AG04450 (cell line): ENCODE measurements at regions of chr20 and their contacts with region 1.

Region 1: GRCh38 chr20:3158968-3159431 is 665 bp downstream of the FASTKD5 start:
- DNase-seq: no peak
- H3K4me3 ChIP-seq: peak overlapping the region; percentile 91
- H3K27ac ChIP-seq: peak overlapping the region; percentile 53
- H3K27me3 ChIP-seq: no peaks in the 10 kb centered on the region
- CTCF ChIP-seq: no peak

Region 2: DNA sequence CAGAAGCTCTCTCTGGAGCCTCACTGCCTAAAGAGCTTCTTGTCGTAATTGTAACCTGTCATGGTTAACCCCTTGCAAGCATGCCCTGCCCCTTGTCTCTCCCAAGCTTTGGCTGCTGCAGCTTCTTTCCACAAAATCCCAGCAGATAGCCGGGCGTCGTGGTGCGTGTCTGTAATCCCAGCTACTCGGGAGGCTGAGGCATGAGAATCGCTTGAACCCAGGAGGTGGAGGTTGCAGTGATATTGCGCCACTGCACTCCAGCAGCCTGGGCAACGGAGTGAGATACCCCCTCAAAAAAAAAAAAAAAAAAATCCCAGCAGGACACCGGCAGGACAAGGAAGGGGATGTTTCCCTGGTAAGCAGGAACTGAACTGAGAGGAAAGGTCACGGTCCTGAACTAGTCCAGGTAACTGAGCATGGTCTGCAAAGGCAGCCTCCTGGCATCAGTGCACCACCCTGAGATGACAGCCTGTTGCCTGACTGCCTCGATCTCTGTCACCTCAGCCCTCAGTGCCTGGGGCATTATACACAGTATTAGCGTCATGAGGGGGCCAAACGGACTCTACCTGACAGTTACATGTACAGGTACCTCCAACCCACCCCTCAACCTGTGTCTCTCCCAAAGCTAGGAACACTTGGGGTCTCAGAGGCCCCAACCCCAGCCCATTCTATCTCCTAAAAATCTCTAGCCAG is 12.5 kb after region 1 on chr20:
- CTCF ChIA-PET with region 1: interaction called, 6 read pairs
- POLR2A ChIA-PET with region 1: interaction called, 10 read pairs
- DNase-seq: no peak
- H3K4me3 ChIP-seq: no peak overlapping the region
- H3K27ac ChIP-seq: no peak overlapping the region
- H3K27me3 ChIP-seq: peaks cover 34% of the 10 kb centered on the region
- CTCF ChIP-seq: no peak